Brain microvascular endothelial cell (primary cell): ENCODE measurements at regions of chr1 and their contacts with region 1.

Region 1: DNA sequence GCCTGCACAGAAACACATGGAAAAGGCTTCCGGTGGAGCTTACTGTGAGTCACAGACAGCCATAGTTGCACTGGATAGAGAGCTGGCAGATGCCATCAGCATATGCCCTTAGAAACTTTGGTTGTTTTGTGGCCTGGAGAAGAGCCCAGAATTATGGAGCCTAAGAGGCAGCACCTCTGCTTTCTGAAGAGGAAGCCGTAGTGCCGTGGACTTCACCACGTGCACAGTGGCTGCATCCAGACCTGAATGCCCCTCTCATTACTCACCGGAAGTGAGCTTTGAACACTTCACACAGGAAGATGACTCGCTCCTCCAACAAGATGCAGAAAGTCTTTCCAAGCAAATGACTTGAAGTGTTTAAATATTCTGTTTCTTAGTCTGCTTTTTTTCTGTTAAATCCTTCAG is 28.4 kb downstream of the JUN start:
- DNase-seq: peak; percentile 96
- H3K4me3 ChIP-seq: no peak overlapping the region
- H3K27ac ChIP-seq: peak overlapping the region; percentile 71
- H3K27me3 ChIP-seq: no peaks in the 10 kb centered on the region
- CTCF ChIP-seq: no peak

Region 2: GRCh38 chr1:59367301-59368007 is 612.0 kb after region 1 on chr1:
- in situ Hi-C with region 1: no loop called
- DNase-seq: peak; percentile 73
- H3K4me3 ChIP-seq: no peak overlapping the region
- H3K27ac ChIP-seq: peak overlapping the region; percentile 37
- H3K27me3 ChIP-seq: no peaks in the 10 kb centered on the region
- CTCF ChIP-seq: no peak

Region 3: DNA sequence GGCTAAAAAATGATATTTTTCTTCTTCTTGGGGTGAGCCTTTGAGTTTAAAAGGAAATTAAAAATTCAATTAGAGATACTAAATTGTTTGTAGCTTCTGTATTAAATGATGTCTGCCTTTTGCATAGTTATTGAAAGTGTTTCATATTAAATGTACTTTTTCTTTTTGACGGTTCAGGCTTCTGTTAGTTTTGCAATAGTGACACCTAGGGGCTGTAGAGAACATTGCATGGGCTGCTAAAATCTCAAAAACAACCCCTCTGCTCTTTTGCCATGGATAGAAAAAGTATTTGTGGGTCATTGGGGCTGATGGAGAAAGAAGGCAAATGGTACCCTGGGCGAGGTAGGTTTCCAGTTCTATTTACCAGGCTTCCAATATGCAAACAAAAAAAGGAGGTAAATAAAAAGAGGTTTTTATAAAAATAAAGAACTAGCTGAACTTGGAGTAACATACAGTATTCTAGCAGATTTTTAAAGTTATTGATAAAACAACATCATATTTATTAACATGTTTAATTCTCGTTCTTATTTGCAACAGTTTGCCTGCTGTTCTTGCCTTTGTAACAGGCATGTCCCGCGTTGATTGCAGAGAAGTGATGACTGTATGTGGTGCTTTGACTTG is 943.9 kb after region 1 on chr1:
- in situ Hi-C with region 1: loop called (anchors 25 kb)
- DNase-seq: peak; percentile 25
- H3K4me3 ChIP-seq: no peak overlapping the region
- H3K27ac ChIP-seq: no peak overlapping the region
- H3K27me3 ChIP-seq: no peaks in the 10 kb centered on the region
- CTCF ChIP-seq: peak; percentile 86